ENCODE measurements at regions of chr11 and their contacts with region 1.

Region 1: GRCh38 chr11:92931746-92932422 is 37.6 kb upstream of the MTNR1B start:
- DNase-seq: no peak
- ATAC-seq: no peak
- H3K4me3 ChIP-seq: no peak overlapping the region
- H3K27ac ChIP-seq: no peak overlapping the region
- H3K4me1 ChIP-seq: no peaks in the 10 kb centered on the region
- H3K27me3 ChIP-seq: no peaks in the 10 kb centered on the region
- CTCF ChIP-seq: no peak
- POLR2A ChIP-seq: no peak

Region 2: GRCh38 chr11:93000511-93001476 is 68.9 kb after region 1 on chr11:
- in situ Hi-C with region 1: no loop called
- intact Hi-C with region 1: no loop called
- DNase-seq: no peak
- ATAC-seq: no peak
- H3K4me3 ChIP-seq: no peak overlapping the region
- H3K27ac ChIP-seq: no peak overlapping the region
- H3K4me1 ChIP-seq: no peaks in the 10 kb centered on the region
- H3K27me3 ChIP-seq: no peaks in the 10 kb centered on the region
- CTCF ChIP-seq: no peak
- POLR2A ChIP-seq: no peak

Region 3: GRCh38 chr11:93225662-93226061 is 293.8 kb after region 1 on chr11:
- in situ Hi-C with region 1: loop called in 1 of 4 experiments (anchors 10 kb)
- intact Hi-C with region 1: no loop called
- DNase-seq: no peak
- ATAC-seq: no peak
- H3K4me3 ChIP-seq: no peak overlapping the region
- H3K27ac ChIP-seq: no peak overlapping the region
- H3K4me1 ChIP-seq: no peaks in the 10 kb centered on the region
- H3K27me3 ChIP-seq: no peaks in the 10 kb centered on the region
- CTCF ChIP-seq: peak; percentile 14 to 42 (median 29)
- POLR2A ChIP-seq: no peak